CD4-positive, alpha-beta memory T cell (primary cell): ENCODE measurements at regions of chr9 and their contacts with region 1.

Region 1: GRCh38 chr9:5582835-5583195 is 46.1 kb upstream of the RIC1 start:
- DNase-seq: peak in 4 of 5 donors; percentile 42 to 63 (median 52)
- H3K4me3 ChIP-seq: no peak overlapping the region
- H3K4me3 Mint-ChIP-seq: peak overlapping the region in 3 of 8 donors; percentile 7 to 48 (median 13)
- H3K27ac ChIP-seq: no peak overlapping the region
- H3K27ac Mint-ChIP-seq: peak overlapping the region; percentile 49 to 92 (median 88)
- H3K4me1 ChIP-seq: peaks cover 35% of the 10 kb centered on the region
- H3K4me1 Mint-ChIP-seq: peaks cover 43 to 64% (median 44%) of the 10 kb centered on the region in 4 donors
- H3K27me3 ChIP-seq: no peaks in the 10 kb centered on the region
- H3K27me3 Mint-ChIP-seq: no peaks in the 10 kb centered on the region

Region 2: DNA sequence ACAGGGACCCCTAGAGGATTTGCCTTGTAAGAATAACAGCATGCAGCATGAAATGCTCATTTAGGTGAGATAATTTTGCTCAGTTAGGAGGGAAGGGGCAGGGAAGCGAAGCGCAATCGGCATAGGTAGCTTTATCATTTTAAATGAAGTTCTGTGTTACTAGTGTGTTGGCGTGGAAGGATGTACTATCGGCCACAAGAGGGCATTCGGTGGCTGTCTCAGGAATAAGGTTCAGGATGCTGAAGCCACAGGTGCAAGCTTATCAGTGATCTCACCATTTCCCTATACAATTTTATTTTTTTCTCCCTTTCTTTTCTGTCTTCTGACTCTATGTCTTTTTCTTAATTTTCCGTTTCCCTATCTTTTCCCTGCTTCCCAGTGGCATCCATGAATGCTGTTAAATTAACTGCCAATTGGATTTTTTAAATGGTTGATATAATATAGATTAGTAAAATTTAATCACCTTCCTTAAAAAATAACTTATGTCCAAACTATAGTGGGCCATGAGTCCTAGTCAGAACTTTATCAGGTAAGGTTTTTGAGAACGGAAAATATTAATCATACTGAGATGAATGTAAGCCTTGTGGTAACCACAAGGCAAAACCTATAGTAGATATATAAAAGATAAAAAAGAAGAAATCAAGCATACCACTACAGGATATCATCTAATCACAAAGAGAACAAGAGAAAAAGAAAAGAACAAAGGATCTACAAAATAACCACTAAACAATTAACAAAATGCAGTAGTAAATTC is 396.2 kb before region 1 on chr9:
- CTCF ChIA-PET with region 1: interaction called, 88 read pairs
- POLR2A ChIA-PET with region 1: no interaction called
- intact Hi-C with region 1: no loop called
- DNase-seq: peak; percentile 67 to 72 (median 71)
- H3K4me3 ChIP-seq: no peak overlapping the region
- H3K4me3 Mint-ChIP-seq: peak overlapping the region in 2 of 8 donors; percentile 3 to 48
- H3K27ac ChIP-seq: no peak overlapping the region
- H3K27ac Mint-ChIP-seq: peak overlapping the region in 5 of 7 donors; percentile 8 to 54 (median 10)
- H3K4me1 ChIP-seq: peaks cover 10% of the 10 kb centered on the region
- H3K4me1 Mint-ChIP-seq: peaks cover 4 to 13% (median 11%) of the 10 kb centered on the region in 4 donors
- H3K27me3 ChIP-seq: no peaks in the 10 kb centered on the region
- H3K27me3 Mint-ChIP-seq: no peaks in the 10 kb centered on the region

Region 3: DNA sequence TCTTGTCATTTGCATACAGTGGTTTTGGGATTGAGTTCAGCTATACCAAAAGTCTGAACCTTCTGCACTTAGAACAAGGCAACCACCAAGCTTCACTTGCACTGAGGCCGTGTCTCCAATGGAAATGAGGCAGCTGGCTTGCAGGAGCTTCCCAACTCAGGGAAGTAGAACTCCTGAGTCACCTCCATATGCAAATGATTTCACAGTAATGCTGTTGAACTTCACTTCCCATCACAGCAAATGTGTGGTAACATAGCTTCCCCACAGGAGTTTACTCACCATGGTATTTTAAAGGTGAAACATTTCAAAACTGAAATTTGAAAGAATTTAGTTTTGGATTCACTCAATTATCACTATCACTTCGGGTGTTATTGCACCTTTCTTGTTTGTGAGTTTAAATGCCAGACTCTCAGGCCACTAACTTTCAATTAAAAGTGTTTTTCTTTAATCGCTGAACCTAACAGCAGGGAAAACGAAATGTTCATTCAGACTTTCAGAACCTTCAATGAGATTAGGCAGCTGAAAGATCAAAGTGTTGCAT is 123.5 kb before region 1 on chr9:
- CTCF ChIA-PET with region 1: interaction called, 10 read pairs
- POLR2A ChIA-PET with region 1: interaction called, 3 read pairs
- intact Hi-C with region 1: no loop called
- DNase-seq: no peak
- H3K4me3 ChIP-seq: no peak overlapping the region
- H3K4me3 Mint-ChIP-seq: peak overlapping the region in 2 of 8 donors; percentile 35 to 48
- H3K27ac ChIP-seq: no peak overlapping the region
- H3K27ac Mint-ChIP-seq: peak overlapping the region in 5 of 7 donors; percentile 2 to 82 (median 72)
- H3K4me1 ChIP-seq: peaks cover 20% of the 10 kb centered on the region
- H3K4me1 Mint-ChIP-seq: peaks cover 28 to 37% (median 32%) of the 10 kb centered on the region in 4 donors
- H3K27me3 ChIP-seq: no peaks in the 10 kb centered on the region
- H3K27me3 Mint-ChIP-seq: no peaks in the 10 kb centered on the region

Region 4: DNA sequence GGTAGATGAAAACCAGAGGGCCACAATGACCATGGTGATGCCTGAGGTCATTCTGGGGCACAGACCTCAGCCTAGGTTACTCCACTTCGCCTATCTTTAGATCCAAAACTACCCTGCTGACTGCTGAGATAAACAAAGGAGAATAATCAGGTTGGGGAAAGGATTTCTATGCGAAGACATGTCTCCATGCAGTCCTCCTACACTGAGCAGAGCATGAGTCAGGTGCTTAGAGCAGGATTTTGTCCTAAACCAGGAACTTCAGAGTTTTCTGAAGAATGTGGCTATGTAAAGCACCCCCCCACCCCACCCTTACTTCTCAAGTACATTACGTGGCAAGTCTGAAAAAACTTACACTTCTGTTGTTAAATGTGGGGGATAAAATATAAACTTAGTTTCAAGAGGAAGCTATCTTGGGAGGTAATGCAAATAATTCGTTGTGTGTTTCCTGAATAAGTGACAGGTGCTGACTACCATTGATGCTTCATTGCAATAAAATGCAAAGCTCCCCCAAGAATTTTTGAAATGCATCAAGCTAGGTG is 53.1 kb before region 1 on chr9:
- CTCF ChIA-PET with region 1: interaction called, 10 read pairs
- POLR2A ChIA-PET with region 1: interaction called, 8 read pairs
- intact Hi-C with region 1: loop called (anchors 10 kb)
- DNase-seq: no peak
- H3K4me3 ChIP-seq: no peak overlapping the region
- H3K4me3 Mint-ChIP-seq: peak overlapping the region in 1 of 8 donors; percentile 2
- H3K27ac ChIP-seq: no peak overlapping the region
- H3K27ac Mint-ChIP-seq: peak overlapping the region in 5 of 7 donors; percentile 36 to 86 (median 67)
- H3K4me1 ChIP-seq: peaks cover 37% of the 10 kb centered on the region
- H3K4me1 Mint-ChIP-seq: peaks cover 37 to 47% (median 42%) of the 10 kb centered on the region in 4 donors
- H3K27me3 ChIP-seq: no peaks in the 10 kb centered on the region
- H3K27me3 Mint-ChIP-seq: no peaks in the 10 kb centered on the region

Region 5: DNA sequence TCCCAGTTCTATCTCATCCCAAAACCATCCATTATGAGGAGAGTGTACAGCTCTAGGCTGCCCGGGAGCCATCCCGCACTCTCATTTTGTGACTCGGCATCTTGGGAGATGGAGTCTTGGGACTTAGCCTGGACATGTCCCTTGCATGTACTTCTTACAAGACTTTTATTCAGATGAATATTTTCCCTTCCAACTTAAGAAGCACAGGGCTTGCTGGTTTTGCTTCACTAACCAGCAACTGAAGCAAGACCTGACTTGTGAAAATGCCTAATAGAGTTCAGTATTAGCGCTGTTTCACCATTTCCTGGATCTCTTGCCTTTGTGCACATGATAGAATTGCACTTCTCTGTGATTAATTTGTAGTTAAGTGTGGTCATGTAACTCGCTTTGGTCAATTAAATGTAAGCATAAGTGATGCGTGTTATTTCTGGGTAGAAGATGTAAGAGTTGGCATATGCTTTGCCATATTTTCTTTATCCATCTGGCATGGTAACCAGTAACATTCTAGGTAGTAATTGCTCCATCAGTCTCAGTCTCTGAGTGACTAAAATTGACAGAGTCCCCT is 16.7 kb before region 1 on chr9:
- CTCF ChIA-PET with region 1: interaction called, 11 read pairs
- POLR2A ChIA-PET with region 1: interaction called, 11 read pairs
- intact Hi-C with region 1: no loop called
- DNase-seq: no peak
- H3K4me3 ChIP-seq: no peak overlapping the region
- H3K4me3 Mint-ChIP-seq: no peak overlapping the region
- H3K27ac ChIP-seq: no peak overlapping the region
- H3K27ac Mint-ChIP-seq: peak overlapping the region in 1 of 7 donors; percentile 7
- H3K4me1 ChIP-seq: peaks cover 28% of the 10 kb centered on the region
- H3K4me1 Mint-ChIP-seq: peaks cover 30 to 47% (median 35%) of the 10 kb centered on the region in 4 donors
- H3K27me3 ChIP-seq: no peaks in the 10 kb centered on the region
- H3K27me3 Mint-ChIP-seq: no peaks in the 10 kb centered on the region

Region 6: DNA sequence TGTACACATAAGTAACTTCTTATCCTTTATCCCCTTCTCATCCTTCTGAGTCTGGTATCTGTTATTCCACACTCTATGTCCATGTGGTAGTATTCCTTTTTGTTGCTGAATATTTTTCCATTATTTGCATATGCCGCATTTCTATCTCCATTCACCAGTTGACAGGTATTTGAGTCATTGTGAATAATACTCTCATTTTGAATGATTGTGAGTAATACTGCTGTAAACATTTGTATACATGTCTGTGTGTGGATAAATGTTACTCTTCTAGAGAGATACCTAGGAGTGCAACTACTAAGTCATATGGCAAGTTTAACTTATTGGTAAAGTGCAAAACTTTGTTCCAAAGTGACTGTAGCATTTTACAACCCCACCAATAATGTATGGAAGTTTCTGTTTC is 61.7 kb after region 1 on chr9:
- CTCF ChIA-PET with region 1: no interaction called
- POLR2A ChIA-PET with region 1: no interaction called
- intact Hi-C with region 1: no loop called
- DNase-seq: no peak
- H3K4me3 ChIP-seq: no peak overlapping the region
- H3K4me3 Mint-ChIP-seq: peak overlapping the region in 1 of 8 donors; percentile 0
- H3K27ac ChIP-seq: no peak overlapping the region
- H3K27ac Mint-ChIP-seq: peak overlapping the region in 2 of 7 donors; percentile 61 to 81
- H3K4me1 ChIP-seq: no peaks in the 10 kb centered on the region
- H3K4me1 Mint-ChIP-seq: peaks cover 22 to 40% (median 34%) of the 10 kb centered on the region in 4 donors
- H3K27me3 ChIP-seq: no peaks in the 10 kb centered on the region
- H3K27me3 Mint-ChIP-seq: no peaks in the 10 kb centered on the region